ENCODE measurements at regions of chr19 and their contacts with region 1.

Region 1: GRCh38 chr19:12696366-12697335 is at the start of gene FBXW9:
- DNase-seq: peak; percentile 94 to 95
- H3K4me3 ChIP-seq: peak within 1 kb of the TSS; percentile 100
- H3K4me3 Mint-ChIP-seq: peak within 1 kb of the TSS; percentile 81
- H3K27ac Mint-ChIP-seq: peak within 1 kb of the TSS; percentile 87
- H3K4me1 ChIP-seq: no peaks in the 10 kb centered on the region
- H3K4me1 Mint-ChIP-seq: no peaks in the 10 kb centered on the region
- H3K27me3 ChIP-seq: no peaks in the 10 kb centered on the region
- H3K27me3 Mint-ChIP-seq: no peaks in the 10 kb centered on the region
- CTCF ChIP-seq: no peak
- total RNA-seq, gene FBXW9: 8.3 and 10.6 TPM in 2 replicates

Region 2: GRCh38 chr19:12672744-12673143 is 23.9 kb before region 1 on chr19:
- CTCF ChIA-PET with region 1: no interaction called
- POLR2A ChIA-PET with region 1: interaction called, 11 read pairs
- intact Hi-C with region 1: no loop called
- DNase-seq: no peak
- H3K4me3 ChIP-seq: no peak overlapping the region
- H3K4me3 Mint-ChIP-seq: no peak overlapping the region
- H3K27ac Mint-ChIP-seq: no peak overlapping the region
- H3K4me1 ChIP-seq: peaks cover 6% of the 10 kb centered on the region; the same call in 1 of the 2 replicates
- H3K4me1 Mint-ChIP-seq: no peaks in the 10 kb centered on the region
- H3K27me3 ChIP-seq: no peaks in the 10 kb centered on the region
- H3K27me3 Mint-ChIP-seq: no peaks in the 10 kb centered on the region
- CTCF ChIP-seq: no peak

Region 3: DNA sequence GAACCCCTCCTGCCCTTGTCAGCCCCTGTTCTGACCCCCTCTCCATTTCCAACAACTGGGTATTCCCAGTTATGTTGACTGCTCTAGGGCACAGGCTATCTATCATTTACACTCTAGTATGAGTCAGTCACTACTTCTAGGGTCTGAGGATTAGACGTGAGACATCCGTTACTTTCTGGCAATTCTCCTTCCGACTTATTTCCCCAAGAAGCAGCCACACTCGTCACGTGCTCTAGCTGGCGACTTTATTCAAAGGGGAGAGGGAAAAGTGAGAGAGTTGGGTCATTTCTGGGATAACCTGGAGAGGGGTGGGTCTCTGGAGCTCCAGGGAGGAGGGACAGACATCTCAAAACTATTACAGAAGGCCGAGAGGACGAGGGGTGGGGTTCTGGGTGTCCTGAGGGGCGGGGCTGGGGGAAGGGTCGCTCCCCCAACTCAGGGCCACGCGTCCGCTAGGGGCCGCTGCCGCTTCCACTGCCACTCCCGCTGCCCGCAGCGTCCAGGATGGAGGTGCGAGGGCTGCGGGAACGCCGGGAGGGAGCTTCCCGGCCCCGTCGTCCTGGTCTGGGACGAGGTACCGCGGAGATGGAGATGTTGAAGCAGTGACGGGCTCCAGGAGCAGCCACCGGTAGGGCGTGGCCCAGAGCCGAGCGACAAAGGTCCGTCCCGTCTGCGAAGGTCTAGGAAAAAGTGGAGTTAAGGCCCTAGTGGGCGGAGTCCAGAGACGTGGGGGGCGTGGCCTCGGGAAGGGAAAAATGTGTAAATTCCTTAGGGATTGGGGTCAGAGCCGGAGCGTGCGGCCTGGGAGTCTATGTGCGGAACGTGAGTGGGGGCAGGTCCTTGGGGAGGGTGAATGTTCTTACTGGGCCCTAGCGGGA is 128.8 kb after region 1 on chr19:
- CTCF ChIA-PET with region 1: no interaction called
- POLR2A ChIA-PET with region 1: no interaction called
- intact Hi-C with region 1: no loop called
- DNase-seq: peak in 1 of 2 experiments; percentile 55
- H3K4me3 ChIP-seq: no peak overlapping the region
- H3K4me3 Mint-ChIP-seq: peak overlapping the region; percentile 66
- H3K27ac Mint-ChIP-seq: no peak overlapping the region
- H3K4me1 ChIP-seq: peaks cover 3% of the 10 kb centered on the region; the same call in 1 of the 2 replicates
- H3K4me1 Mint-ChIP-seq: no peaks in the 10 kb centered on the region
- H3K27me3 ChIP-seq: no peaks in the 10 kb centered on the region
- H3K27me3 Mint-ChIP-seq: no peaks in the 10 kb centered on the region
- CTCF ChIP-seq: peak; percentile 17 to 30